ENCODE measurements at regions of chr16 and their contacts with region 1.

Region 1: GRCh38 chr16:66275775-66276428 is 90.6 kb upstream of the CDH5 start:
- DNase-seq: no peak
- ATAC-seq: no peak

Region 2: DNA sequence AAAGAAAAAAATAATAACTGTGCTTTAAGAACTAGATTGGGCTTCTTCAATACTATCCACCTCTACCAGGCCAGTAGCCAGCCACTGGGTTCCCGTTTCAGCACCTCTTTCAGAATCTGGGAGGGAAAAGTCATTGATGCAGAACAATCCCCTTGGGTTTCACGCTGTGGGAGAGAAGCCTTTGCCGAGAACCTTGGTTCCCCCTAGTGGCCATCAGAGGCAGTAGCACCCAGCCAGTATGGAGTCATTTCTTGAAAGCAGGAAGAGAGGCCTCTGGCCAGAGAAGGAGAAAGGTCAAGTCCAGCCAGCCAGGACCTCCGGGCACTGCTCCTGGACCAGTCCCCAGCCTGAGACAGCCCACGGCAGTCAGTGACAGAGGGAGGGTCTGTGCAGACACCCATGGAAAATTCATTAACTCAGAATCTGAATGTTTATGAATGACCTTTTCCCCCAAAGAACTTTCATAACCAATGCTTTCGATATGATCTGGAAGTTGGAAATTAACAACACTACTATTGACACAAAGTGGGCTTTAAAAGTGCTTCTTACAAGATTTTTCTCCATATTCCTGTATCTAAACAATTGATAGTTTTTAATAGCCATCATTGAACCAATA is 39.4 kb after region 1 on chr16:
- intact Hi-C with region 1: loop called (anchors 5 kb)
- DNase-seq: no peak
- ATAC-seq: peak; percentile 85

Region 3: DNA sequence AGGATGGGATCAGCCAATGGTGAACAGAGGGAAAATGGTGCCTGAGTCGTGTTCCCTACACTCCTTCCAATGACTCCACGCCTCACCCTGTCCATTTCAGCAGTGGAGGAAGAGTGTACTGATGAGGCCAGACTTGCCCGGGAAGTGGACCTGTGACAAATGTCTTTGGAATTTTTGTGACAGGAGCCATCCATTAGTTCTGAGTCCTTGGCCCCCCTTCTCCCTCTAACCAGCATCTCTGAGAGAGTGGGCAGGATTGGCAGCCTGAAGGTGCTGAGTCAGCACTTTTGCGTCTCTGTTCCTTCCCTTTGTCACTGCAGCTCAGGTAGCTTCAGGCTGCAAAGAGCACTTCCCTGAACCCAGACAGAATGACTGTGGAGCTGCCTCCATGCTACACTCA is 182.0 kb after region 1 on chr16:
- intact Hi-C with region 1: no loop called
- DNase-seq: no peak
- ATAC-seq: no peak